Posterior vena cava (tissue), 2 donors: ENCODE measurements at regions of chr11 and their contacts with region 1.

Region 1: GRCh38 chr11:94283678-94284077 is 20.7 kb upstream of the IZUMO1R start:
- DNase-seq: no peak

Region 2: DNA sequence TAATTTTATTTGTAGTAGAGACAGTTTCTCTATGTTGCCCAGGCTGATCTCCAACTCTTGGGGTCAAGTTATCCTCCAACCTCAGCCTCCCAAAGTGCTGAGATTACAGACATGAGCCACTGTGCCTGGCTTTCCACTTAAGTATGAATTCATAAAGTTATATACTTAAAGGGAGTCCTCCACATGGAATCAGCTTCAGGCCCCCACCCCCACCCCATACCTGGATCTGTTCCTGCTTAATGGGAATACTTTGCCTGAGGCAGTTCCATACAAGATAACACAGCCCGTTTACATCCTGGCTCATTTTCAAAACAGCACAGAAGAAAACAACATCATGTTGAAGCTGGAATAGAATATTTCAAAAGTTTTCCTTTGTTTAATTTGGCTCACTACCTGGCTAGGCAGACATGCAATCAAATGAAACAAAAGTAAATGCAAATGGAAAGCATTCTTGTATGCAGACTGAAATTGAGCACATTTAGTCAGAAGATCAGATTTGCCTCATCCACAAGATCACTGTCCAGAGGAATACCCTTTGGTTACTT is 1976.6 kb before region 1 on chr11:
- intact Hi-C with region 1: loop called in 1 of 2 experiments (anchors 5 kb)
- DNase-seq: no peak